ENCODE measurements at regions of chr16 and their contacts with region 1.

Region 1: GRCh38 chr16:9665851-9666271 is 516.4 kb downstream of the GRIN2A start:
- DNase-seq: peak; percentile 82
- H3K4me3 Mint-ChIP-seq: peak overlapping the region; percentile 56
- H3K27ac Mint-ChIP-seq: peak overlapping the region; percentile 97
- H3K4me1 Mint-ChIP-seq: peaks cover 66% of the 10 kb centered on the region
- H3K27me3 Mint-ChIP-seq: no peaks in the 10 kb centered on the region
- CTCF ChIP-seq: no peak

Region 2: DNA sequence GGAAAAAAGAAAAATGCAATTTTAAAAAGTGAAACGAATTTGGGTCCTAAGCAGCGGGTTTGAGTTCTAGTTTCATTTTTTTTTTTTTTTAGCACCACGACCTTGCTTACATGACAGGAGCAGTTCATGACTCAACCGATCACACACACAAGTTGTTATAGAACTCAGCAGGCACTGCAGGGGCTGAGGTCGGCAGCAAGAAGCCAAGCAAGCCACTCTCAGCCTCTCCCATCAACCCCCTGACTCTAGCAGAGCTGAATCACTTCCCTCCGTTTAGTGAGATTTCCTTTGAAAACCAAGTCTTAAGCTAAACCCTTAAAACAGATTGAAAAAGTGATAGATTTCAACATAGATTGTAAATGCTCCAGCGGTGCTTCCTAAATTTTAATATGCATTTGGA is 53.6 kb before region 1 on chr16:
- CTCF ChIA-PET with region 1: no interaction called
- intact Hi-C with region 1: no loop called
- DNase-seq: no peak
- H3K4me3 Mint-ChIP-seq: no peak overlapping the region
- H3K27ac Mint-ChIP-seq: no peak overlapping the region
- H3K4me1 Mint-ChIP-seq: peaks cover 9% of the 10 kb centered on the region
- H3K27me3 Mint-ChIP-seq: peaks cover 1% of the 10 kb centered on the region
- CTCF ChIP-seq: no peak

Region 3: GRCh38 chr16:9647981-9648712 is 17.7 kb before region 1 on chr16:
- CTCF ChIA-PET with region 1: interaction called, 19 read pairs
- intact Hi-C with region 1: no loop called
- DNase-seq: peak; percentile 53
- H3K4me3 Mint-ChIP-seq: no peak overlapping the region
- H3K27ac Mint-ChIP-seq: no peak overlapping the region
- H3K4me1 Mint-ChIP-seq: peaks cover 22% of the 10 kb centered on the region
- H3K27me3 Mint-ChIP-seq: no peaks in the 10 kb centered on the region
- CTCF ChIP-seq: peak; percentile 77

Region 4: DNA sequence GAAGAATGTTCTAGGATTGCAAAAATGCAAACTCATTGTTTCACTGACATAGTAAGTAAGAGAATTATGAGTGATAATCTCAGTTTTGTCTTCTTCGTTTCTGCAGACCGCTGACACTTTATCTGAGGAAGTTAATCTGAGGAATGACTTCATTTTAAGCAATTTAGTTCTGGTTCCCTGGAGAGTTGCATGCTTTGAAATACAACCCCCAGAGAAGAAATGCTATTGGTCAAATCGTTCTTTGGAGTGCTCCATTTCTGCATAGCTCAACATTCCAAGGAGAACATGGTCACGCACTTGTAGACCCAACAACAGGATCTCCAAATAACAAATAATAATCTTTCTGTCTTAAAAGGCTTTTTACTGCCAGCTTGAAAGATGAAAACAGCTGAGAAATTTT is 89.2 kb after region 1 on chr16:
- CTCF ChIA-PET with region 1: no interaction called
- intact Hi-C with region 1: no loop called
- DNase-seq: no peak
- H3K4me3 Mint-ChIP-seq: no peak overlapping the region
- H3K27ac Mint-ChIP-seq: no peak overlapping the region
- H3K4me1 Mint-ChIP-seq: peaks cover 8% of the 10 kb centered on the region
- H3K27me3 Mint-ChIP-seq: no peaks in the 10 kb centered on the region
- CTCF ChIP-seq: no peak

Region 5: GRCh38 chr16:9772526-9773225 is 106.8 kb after region 1 on chr16:
- CTCF ChIA-PET with region 1: no interaction called
- intact Hi-C with region 1: no loop called
- DNase-seq: no peak
- H3K4me3 Mint-ChIP-seq: no peak overlapping the region
- H3K27ac Mint-ChIP-seq: no peak overlapping the region
- H3K4me1 Mint-ChIP-seq: no peaks in the 10 kb centered on the region
- H3K27me3 Mint-ChIP-seq: no peaks in the 10 kb centered on the region
- CTCF ChIP-seq: no peak

Region 6: DNA sequence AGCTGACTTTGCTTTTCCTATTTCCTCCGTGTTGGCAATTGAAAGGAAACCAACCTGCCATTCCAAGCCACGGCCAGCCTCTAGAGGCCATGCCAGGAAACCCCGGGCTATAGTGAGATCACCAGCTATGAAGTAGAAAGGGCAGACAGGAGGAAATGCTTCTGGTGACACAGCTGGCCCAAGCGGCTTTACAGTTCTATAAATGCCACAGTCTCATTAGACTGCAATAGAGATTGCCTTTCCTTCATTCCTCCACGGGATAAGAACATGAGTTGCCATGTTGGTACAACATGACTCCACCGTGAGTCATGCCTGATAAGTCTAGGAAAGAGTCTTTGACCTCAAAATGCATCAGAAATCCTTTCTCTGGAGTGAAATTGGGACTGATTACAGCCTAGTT is 131.4 kb after region 1 on chr16:
- CTCF ChIA-PET with region 1: interaction called, 5 read pairs
- intact Hi-C with region 1: loop called (anchors 5 kb)
- DNase-seq: peak; percentile 80
- H3K4me3 Mint-ChIP-seq: peak overlapping the region; percentile 46
- H3K27ac Mint-ChIP-seq: peak overlapping the region; percentile 93
- H3K4me1 Mint-ChIP-seq: peaks cover 28% of the 10 kb centered on the region
- H3K27me3 Mint-ChIP-seq: no peaks in the 10 kb centered on the region
- CTCF ChIP-seq: no peak

Region 7: DNA sequence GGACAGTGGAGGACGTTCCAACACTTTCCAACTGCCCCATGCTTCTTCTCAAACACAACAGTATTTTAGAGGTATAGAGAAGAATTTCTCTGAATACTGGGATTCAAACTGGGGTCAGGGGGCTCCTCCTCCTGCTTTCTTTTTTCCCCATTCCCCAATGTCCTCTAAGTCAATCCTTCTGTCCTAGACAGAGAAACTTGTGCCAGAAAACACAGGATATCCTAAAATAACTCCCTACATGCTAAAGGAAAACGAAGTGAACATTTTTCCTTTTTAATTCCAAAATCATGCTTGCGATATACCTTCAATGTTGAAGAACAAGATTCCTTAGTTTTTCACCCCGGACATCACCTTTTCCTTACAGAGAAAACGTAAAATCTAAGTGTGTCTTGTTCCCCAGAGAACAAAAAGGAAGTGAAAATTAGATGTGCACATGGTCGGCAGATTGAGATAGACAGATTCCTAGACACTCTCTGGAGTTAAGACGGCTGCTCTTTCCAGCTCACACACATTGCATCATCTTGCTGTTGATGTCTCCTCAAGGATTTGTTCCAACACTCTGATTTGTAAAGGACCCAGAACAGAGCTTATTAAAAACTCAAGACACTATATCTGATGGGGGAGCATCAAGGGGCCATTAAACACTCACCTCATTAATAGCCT is 288.2 kb after region 1 on chr16:
- CTCF ChIA-PET with region 1: no interaction called
- intact Hi-C with region 1: loop called (anchors 10 kb)
- DNase-seq: no peak
- H3K4me3 Mint-ChIP-seq: no peak overlapping the region
- H3K27ac Mint-ChIP-seq: no peak overlapping the region
- H3K4me1 Mint-ChIP-seq: peaks cover 12% of the 10 kb centered on the region
- H3K27me3 Mint-ChIP-seq: no peaks in the 10 kb centered on the region
- CTCF ChIP-seq: no peak

Region 8: GRCh38 chr16:10122546-10122945 is 456.7 kb after region 1 on chr16:
- CTCF ChIA-PET with region 1: no interaction called
- intact Hi-C with region 1: loop called (anchors 5 kb)
- DNase-seq: peak; percentile 72
- H3K4me3 Mint-ChIP-seq: peak overlapping the region; percentile 46
- H3K27ac Mint-ChIP-seq: peak overlapping the region; percentile 83
- H3K4me1 Mint-ChIP-seq: peaks cover 68% of the 10 kb centered on the region
- H3K27me3 Mint-ChIP-seq: no peaks in the 10 kb centered on the region
- CTCF ChIP-seq: peak; percentile 69

Measured in Calu3 (cell line).